SK-N-SH (cell line): ENCODE measurements at regions of chr11 and their contacts with region 1.

Region 1: DNA sequence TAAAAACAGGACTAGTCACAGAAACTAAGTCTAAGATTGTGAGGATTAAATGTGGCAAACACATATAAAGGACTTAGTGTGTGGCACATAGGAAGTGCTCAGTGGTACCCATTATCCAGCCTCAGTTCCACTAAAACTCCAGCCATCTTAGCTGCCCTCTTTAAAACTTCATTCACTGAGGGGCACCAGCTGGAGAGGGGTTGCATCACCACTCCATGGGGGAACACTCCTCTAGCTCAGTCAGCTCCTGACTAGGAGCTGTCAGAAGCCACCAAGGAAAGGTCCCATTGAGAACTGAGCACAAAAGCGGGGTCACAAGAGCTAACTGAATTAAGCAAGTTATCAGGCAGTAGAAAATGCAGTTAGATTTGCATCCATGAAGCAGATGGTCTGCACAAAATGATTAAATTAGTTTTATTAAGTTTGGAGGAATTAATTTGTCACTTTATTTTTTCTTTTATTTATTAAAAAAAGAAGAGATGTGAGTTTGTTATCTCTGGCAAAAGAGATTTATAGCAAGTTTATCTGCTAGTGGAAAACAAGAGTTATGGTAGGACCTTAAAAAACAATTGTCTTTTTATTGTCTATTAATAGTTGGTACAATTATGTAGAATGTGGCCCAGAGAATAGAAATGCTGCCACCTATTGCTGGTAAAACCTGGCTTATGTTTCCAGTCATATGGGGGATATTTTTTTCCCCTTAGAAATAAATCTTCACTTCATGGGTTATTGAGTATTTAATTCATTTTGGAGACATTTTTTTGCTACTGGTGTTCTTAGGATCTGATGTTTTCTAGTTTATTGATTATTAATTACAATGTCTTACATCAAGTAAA is 95.7 kb downstream of the NAV2 start:
- DNase-seq: peak; percentile 39
- H3K4me3 ChIP-seq: no peak overlapping the region
- H3K27ac ChIP-seq: peak overlapping the region; percentile 12 to 69; a peak in 2 of 4 replicates
- H3K4me1 ChIP-seq: peaks cover 4 to 65% of the 10 kb centered on the region in 2 experiments; a peak in 3 of 4 replicates
- H3K27me3 ChIP-seq: no peaks in the 10 kb centered on the region
- CTCF ChIP-seq: peak; percentile 48
- EP300 ChIP-seq: peak in 1 of 2 experiments; percentile 92; a peak in 2 of 4 replicates
- RAD21 ChIP-seq: peak; percentile 65

Region 2: GRCh38 chr11:19795082-19795481 is 13.2 kb before region 1 on chr11:
- CTCF ChIA-PET with region 1: interaction called, 13 read pairs
- POLR2A ChIA-PET with region 1: no interaction called
- DNase-seq: no peak
- H3K4me3 ChIP-seq: no peak overlapping the region
- H3K27ac ChIP-seq: no peak overlapping the region; a peak in 1 of 4 replicates
- H3K4me1 ChIP-seq: peaks cover 0 to 65% of the 10 kb centered on the region in 2 experiments; a peak in 2 of 4 replicates
- H3K27me3 ChIP-seq: no peaks in the 10 kb centered on the region
- CTCF ChIP-seq: no peak
- EP300 ChIP-seq: no peak
- RAD21 ChIP-seq: no peak

Region 3: DNA sequence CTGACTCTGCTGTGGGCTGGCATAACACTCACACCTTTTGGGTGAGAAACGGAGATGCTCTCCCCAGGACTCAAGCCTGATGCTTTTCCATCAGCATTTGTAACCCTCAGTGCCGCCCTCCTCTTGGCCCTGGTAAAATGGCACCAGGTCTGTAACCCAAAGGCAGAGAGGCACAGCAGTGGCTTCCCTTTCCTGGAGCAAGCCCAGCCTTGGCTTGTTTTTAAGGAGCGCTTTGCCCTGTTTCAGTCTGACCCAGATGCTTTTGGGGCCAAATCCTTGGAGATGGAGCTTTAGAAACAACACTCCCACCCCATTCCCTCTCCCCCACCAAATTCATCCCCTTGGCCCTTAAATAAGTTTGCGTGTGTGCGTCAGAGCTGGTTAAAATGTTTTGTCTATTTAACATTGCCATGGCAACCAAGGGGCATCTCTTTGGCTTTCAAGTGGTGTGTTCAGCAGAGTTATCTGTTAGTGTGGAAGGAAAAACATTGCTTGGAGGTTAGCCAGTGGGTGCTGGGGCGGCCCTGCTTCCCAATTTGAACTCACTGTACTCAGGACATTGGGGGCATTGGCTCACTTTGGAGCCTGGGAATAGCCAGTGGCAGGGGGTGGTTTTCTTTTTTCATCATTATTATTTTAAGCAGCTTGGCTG is 38.5 kb after region 1 on chr11:
- CTCF ChIA-PET with region 1: interaction called, 13 read pairs
- POLR2A ChIA-PET with region 1: no interaction called
- DNase-seq: no peak
- H3K4me3 ChIP-seq: no peak overlapping the region
- H3K27ac ChIP-seq: peak overlapping the region in 1 of 2 experiments; percentile 19; a peak in 3 of 4 replicates
- H3K4me1 ChIP-seq: peaks cover 0 to 64% of the 10 kb centered on the region in 2 experiments; a peak in 2 of 4 replicates
- H3K27me3 ChIP-seq: no peaks in the 10 kb centered on the region
- CTCF ChIP-seq: no peak
- EP300 ChIP-seq: no peak
- RAD21 ChIP-seq: no peak